K562 (cell line): ENCODE measurements at regions of chr3 and their contacts with region 1.

Region 1: GRCh38 chr3:63661248-63661647 is 8.8 kb downstream of the SNTN start:
- DNase-seq: peak in 2 of 4 experiments; percentile 2 to 3
- ATAC-seq: 0 out of 3 replicates have a peak, but pooled peaks have one; percentile 32
- H3K4me3 ChIP-seq: no peak overlapping the region
- H3K27ac ChIP-seq: no peak overlapping the region
- H3K4me1 ChIP-seq: no peaks in the 10 kb centered on the region
- H3K27me3 ChIP-seq: no peaks in the 10 kb centered on the region
- CTCF ChIP-seq: no peak
- EP300 ChIP-seq: no peak
- POLR2A ChIP-seq: no peak
- RAD21 ChIP-seq: no peak

Region 2: DNA sequence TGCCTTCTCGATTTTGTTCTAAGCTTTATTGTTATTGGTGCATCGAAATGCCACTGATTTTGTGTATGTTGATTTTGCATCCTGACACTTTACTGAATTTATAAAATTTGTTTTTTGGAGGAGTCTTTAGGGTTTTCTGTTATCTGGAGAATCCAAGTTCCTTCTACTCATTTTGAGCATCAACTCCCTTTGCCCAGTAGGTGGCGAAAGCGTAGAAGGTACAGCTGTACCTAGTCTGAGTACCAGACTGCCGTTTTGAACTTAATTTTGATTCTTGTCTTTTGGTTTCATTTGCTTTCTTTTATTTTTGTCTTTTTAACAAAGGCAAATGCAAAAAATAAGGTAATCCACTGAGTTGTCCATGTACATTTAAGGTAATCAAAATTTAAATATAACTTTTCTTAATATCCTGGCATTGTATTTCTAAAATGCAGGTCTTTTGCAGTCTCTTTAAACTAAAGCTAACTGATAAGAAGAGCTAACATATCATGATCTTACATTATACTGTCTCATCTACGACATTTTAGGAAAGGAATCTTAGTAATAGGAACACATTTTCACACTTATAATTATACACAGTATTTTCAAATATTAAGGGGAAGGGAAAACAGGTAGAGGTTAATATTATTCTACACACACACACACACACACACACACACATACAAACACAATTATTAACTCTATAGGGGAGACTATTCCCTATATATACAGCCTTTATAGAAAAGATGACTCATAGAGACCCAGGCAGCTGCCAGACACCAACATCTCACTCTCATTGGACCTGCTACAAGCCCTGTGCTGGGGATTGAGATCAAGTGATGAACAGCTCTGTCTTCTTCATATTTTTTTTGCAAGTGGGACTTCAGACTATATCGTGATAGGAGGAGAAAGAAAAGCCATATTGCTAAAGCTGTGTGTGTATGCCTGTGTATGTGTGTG is 311.4 kb before region 1 on chr3:
- CTCF ChIA-PET with region 1: interaction called, 3 read pairs
- POLR2A ChIA-PET with region 1: no interaction called
- in situ Hi-C with region 1: no loop called
- intact Hi-C with region 1: loop called (anchors 10 kb)
- DNase-seq: peak; percentile 16 to 52 (median 31)
- ATAC-seq: peak; percentile 67; the same call in 2 of the 3 replicates
- H3K4me3 ChIP-seq: no peak overlapping the region
- H3K27ac ChIP-seq: no peak overlapping the region
- H3K4me1 ChIP-seq: no peaks in the 10 kb centered on the region
- H3K27me3 ChIP-seq: no peaks in the 10 kb centered on the region
- CTCF ChIP-seq: peak; percentile 52 to 66 (median 58)
- EP300 ChIP-seq: no peak
- POLR2A ChIP-seq: no peak
- RAD21 ChIP-seq: peak; percentile 30 to 52

Region 3: GRCh38 chr3:63400246-63400860 is 260.9 kb before region 1 on chr3:
- CTCF ChIA-PET with region 1: no interaction called
- POLR2A ChIA-PET with region 1: no interaction called
- in situ Hi-C with region 1: no loop called
- intact Hi-C with region 1: no loop called
- DNase-seq: no peak
- ATAC-seq: no peak
- H3K4me3 ChIP-seq: no peak overlapping the region
- H3K27ac ChIP-seq: no peak overlapping the region
- H3K4me1 ChIP-seq: no peaks in the 10 kb centered on the region
- H3K27me3 ChIP-seq: no peaks in the 10 kb centered on the region
- CTCF ChIP-seq: no peak
- EP300 ChIP-seq: no peak
- POLR2A ChIP-seq: no peak
- RAD21 ChIP-seq: no peak